Left ventricle myocardium superior (tissue), 1 donor: ENCODE measurements at regions of chr3 and their contacts with region 1.

Region 1: GRCh38 chr3:122258757-122259371 is 66.2 kb upstream of the CSTA start:
- DNase-seq: peak; percentile 74
- ATAC-seq: peak; percentile 91

Region 2: DNA sequence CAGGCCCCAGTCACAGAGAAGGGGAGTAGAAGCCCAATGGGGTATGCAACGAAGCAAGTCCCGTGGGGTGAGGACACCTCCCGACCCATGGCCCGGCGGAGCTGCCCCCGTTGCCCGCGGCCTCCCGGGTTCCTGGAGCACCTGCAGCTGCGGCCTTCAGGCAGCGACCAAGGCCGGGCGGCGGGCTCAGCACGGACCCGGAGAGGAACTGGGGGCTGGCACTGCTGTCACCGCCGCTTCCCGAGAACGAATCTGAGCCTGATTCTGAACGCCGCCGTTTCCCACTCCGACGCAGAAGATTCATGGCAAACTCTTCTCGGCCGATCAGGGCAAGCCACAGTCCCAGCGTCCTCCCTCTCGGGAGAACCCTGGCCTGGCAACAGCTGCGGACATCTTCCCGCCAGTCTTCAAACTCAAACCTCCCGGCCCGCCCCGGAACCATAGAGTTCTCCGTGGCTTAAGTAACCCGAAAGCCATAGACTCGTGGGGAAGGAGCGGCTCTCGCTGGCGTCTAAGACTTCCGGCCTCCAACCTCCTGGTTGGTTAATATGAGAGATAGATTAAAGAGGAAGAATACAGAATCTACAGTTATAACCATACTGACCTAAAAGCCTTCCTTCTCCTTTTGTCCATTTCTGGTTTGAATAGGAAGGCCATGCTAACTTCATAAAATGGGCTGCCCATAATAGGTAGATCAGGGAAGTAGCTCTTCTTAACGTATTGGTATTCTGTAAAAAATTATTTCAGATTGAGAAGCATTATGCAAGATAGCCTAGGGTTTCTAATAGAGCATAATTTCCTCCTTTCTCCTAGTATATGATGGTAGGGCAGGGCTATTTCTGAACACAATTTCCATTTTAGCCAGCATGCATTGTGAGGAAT is 713.0 kb before region 1 on chr3 and contains the start of gene POLQ:
- intact Hi-C with region 1: loop called (anchors 2 kb)
- DNase-seq: peak; percentile 90
- ATAC-seq: peak; percentile 100
- total RNA-seq, gene POLQ: 0.79 TPM

Region 3: DNA sequence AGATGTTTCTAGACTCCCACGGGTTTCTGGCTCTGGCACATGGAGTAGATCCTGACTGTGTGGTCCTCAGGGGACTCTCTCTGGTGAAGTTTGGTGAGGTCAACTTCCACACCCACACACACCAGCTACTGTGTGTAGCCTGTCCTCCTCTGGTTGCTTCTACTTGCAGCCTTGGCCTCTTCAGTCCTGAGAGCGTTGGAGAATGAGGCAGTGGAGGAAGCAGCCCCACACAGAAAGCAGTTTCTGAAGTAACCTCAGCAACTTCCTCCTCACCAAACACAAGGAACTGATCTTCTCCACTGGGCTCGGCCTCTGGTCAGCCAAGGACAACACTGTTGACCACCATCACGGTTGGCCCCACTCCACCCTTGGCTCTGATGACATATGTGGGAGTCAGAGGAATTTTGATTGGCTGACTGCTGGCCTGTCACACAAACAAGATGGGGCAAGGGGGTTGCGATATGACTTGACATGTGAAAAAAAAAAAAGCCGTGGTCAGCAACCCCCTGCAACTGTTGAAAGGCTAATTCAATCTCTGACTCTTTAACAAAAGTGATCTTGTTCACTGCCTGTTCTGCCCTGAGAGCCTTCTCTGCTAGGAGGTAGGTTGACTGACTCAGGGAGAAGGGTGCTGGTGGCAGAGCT is 184.1 kb before region 1 on chr3:
- intact Hi-C with region 1: no loop called
- DNase-seq: peak; percentile 71
- ATAC-seq: peak; percentile 96

Region 4: DNA sequence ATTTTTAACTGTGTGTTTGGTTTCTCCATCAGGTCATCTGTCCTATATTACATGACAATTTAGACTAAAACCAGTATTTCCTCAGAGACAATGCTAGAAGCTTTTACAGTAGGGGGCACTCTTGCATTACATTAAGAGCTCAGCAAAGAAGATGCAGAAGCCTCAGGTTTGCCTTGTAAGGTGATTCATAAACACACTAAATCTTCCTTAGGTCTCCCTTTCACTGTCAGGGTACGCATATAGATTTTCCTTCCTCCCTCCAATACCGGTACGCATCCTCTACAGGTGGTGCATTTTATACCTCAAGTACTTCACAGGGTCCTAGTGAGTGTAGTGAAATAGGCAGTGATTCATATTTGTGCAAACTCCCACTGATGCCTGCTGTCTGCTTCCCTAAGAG is 157.2 kb before region 1 on chr3:
- intact Hi-C with region 1: loop called (anchors 10 kb)
- DNase-seq: no peak
- ATAC-seq: no peak

Region 5: GRCh38 chr3:122214711-122215110 is 44.2 kb before region 1 on chr3:
- intact Hi-C with region 1: no loop called
- DNase-seq: no peak
- ATAC-seq: no peak